PC-9 (cell line): ENCODE measurements at regions of chr10 and their contacts with region 1.

Region 1: GRCh38 chr10:112811740-112812551 is 138.1 kb upstream of the TCF7L2 start:
- DNase-seq: peak; percentile 72 to 98
- H3K4me3 ChIP-seq: peak overlapping the region; percentile 42; the same call in 1 of the 2 replicates
- H3K27ac ChIP-seq: peak overlapping the region; percentile 88
- H3K4me1 ChIP-seq: peaks cover 68% of the 10 kb centered on the region
- H3K27me3 ChIP-seq: no peaks in the 10 kb centered on the region
- CTCF ChIP-seq: no peak

Region 2: GRCh38 chr10:111954386-111954785 is 857.6 kb before region 1 on chr10:
- CTCF ChIA-PET with region 1: no interaction called
- POLR2A ChIA-PET with region 1: no interaction called
- intact Hi-C with region 1: no loop called
- DNase-seq: no peak
- H3K4me3 ChIP-seq: no peak overlapping the region
- H3K27ac ChIP-seq: no peak overlapping the region
- H3K4me1 ChIP-seq: no peaks in the 10 kb centered on the region
- H3K27me3 ChIP-seq: no peaks in the 10 kb centered on the region
- CTCF ChIP-seq: no peak

Region 3: DNA sequence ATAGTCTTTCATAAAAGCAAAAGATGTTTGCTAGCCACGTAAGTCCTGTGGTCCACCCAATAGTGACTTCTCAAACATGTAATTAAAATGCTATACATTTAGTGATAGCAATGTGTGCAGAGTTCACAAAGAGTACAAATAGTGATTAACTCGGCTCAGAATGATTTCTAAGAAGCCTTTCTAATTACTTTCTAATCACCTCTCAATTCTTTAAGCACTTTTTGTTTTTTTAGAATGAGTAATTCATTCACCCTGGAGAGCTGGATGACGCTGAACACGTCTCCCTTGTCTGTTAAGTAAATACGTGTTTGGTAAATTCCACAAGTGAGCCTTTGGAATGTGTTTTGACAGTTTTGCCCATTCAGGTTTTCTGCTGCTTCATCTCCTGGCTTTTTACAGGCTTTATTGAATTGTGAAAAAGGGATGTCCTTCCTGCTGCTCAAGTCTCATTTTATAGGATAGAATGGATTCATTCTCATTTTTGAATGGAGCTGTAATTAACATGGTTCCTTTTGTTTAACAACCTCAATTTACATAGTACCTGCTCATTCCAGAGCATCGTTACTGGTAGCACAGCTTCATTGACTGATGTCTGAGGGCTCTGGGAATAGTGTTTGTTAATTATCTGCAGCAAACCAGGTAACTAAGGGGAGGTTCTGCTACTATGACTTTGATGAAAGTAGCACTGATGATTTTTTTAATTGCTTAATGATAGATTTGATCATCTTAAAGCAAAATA is 152.9 kb before region 1 on chr10:
- CTCF ChIA-PET with region 1: no interaction called
- POLR2A ChIA-PET with region 1: no interaction called
- intact Hi-C with region 1: loop called (anchors 10 kb)
- DNase-seq: peak in 1 of 2 experiments; percentile 85
- H3K4me3 ChIP-seq: no peak overlapping the region
- H3K27ac ChIP-seq: peak overlapping the region; percentile 61
- H3K4me1 ChIP-seq: peaks cover 30% of the 10 kb centered on the region
- H3K27me3 ChIP-seq: no peaks in the 10 kb centered on the region
- CTCF ChIP-seq: no peak

Region 4: GRCh38 chr10:112711366-112711765 is 100.6 kb before region 1 on chr10:
- CTCF ChIA-PET with region 1: no interaction called
- POLR2A ChIA-PET with region 1: no interaction called
- intact Hi-C with region 1: no loop called
- DNase-seq: no peak
- H3K4me3 ChIP-seq: no peak overlapping the region
- H3K27ac ChIP-seq: no peak overlapping the region
- H3K4me1 ChIP-seq: no peaks in the 10 kb centered on the region
- H3K27me3 ChIP-seq: no peaks in the 10 kb centered on the region
- CTCF ChIP-seq: no peak

Region 5: GRCh38 chr10:112767156-112767555 is 44.8 kb before region 1 on chr10:
- CTCF ChIA-PET with region 1: no interaction called
- POLR2A ChIA-PET with region 1: no interaction called
- intact Hi-C with region 1: loop called (anchors 2 kb)
- DNase-seq: peak in 1 of 2 experiments; percentile 79
- H3K4me3 ChIP-seq: 0 out of 2 replicates have a peak overlapping the region, but pooled peaks have one; percentile 2
- H3K27ac ChIP-seq: peak overlapping the region; percentile 92
- H3K4me1 ChIP-seq: peaks cover 59% of the 10 kb centered on the region
- H3K27me3 ChIP-seq: no peaks in the 10 kb centered on the region
- CTCF ChIP-seq: no peak

Region 6: DNA sequence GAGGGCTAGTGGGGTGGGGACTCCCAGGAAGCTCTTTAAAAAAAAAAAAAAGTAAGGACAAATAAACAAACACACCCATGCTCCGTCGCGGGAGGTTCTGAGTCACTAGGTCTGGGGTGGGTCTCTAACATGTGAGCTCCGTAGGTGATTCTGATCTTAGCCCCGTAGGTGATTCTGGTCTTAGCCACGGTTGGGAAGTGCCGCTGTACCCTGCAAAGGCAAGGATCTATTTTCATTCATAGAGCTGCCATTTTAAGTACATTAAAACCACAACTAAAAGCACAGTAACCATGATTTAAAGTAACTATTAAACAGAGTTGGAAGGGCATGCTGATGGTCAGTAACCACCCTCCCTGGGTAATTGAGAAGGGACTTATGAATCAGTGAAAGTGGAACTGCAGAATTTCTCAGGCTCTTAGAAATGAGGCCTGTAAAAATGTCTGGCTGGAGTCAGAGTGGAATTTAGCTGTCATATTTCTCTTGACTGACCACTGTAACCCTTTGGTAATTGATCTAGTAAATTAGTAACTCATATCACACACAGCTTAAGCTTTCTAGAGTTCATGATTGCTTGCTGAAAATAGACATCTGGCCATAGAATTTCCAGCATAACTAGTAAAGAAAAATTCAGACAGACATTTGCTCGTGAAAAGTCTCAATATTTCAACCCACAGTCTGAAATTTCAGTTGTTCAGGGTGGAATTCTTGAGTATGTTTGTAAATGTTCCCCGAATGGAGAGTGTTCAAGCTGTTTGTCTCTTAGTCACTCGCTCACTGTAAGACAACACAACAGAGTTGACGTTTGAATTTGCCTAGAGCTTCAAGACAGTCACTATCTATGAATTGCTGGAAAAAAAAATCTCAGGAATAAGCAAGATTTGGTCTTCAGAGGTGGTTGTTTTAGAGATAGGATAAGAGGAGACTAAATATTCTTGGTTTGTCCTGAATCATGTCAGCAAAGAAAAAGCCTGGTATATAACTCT is 103.9 kb after region 1 on chr10:
- CTCF ChIA-PET with region 1: no interaction called
- POLR2A ChIA-PET with region 1: interaction called, 3 read pairs
- intact Hi-C with region 1: loop called (anchors 10 kb)
- DNase-seq: peak; percentile 62 to 82
- H3K4me3 ChIP-seq: peak overlapping the region; percentile 37; the same call in 1 of the 2 replicates
- H3K27ac ChIP-seq: peak overlapping the region; percentile 82
- H3K4me1 ChIP-seq: peaks cover 43% of the 10 kb centered on the region
- H3K27me3 ChIP-seq: no peaks in the 10 kb centered on the region
- CTCF ChIP-seq: no peak

Region 7: GRCh38 chr10:113073549-113074189 is 261.7 kb after region 1 on chr10:
- CTCF ChIA-PET with region 1: no interaction called
- POLR2A ChIA-PET with region 1: interaction called, 10 read pairs
- intact Hi-C with region 1: loop called (anchors 1 kb)
- DNase-seq: peak; percentile 89 to 96
- H3K4me3 ChIP-seq: peak overlapping the region; percentile 28; the same call in 1 of the 2 replicates
- H3K27ac ChIP-seq: peak overlapping the region; percentile 84
- H3K4me1 ChIP-seq: peaks cover 27% of the 10 kb centered on the region
- H3K27me3 ChIP-seq: no peaks in the 10 kb centered on the region
- CTCF ChIP-seq: no peak

Region 8: DNA sequence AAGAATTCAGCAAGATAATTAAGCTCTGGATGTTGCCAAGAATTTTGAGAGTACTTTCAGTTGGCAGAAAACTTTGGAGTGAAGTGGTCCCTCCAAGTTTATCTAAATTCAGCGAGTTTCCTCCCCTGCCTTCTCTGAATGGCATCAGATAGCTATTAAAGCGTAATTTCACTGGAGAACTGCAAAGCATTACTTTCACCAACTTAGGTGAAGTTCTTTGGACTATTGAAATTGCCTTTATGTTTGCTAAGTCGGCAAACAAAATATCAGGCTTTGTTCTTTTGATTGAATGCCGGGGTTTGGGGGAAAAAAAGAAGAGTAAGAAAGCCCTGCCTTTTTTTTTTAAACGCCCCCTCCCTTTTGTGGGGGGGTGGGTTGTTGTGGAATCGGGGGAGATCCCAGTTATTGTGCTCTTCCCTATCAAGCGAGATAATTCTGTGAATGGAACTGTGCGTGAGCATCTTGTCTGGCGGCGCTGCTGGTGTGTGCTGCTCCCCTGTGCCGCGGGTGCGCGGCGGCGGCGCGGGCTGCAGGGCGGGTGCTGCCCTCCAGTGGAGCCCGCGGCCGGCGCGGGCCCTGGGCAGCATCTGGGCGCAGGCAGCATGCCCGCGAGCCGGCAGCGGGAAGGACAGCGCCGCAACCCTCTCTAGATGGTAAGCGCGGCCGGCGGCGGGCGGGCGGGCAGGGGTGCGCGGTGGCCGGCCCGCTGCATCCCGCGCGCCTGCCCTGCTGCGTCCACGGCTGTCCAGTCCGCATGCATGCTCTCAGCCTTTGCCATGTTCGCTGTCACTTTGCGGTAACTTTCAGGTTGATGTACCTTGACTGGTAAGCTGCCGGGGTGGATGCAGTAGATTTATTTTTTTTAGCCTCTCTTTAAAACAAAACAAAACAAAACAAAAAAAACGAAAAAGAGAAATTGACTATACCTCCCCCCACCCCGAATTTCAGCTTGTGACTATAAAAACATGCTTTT is 314.6 kb after region 1 on chr10:
- CTCF ChIA-PET with region 1: interaction called, 6 read pairs
- POLR2A ChIA-PET with region 1: no interaction called
- intact Hi-C with region 1: loop called (anchors 5 kb)
- DNase-seq: peak in 1 of 2 experiments; percentile 63
- H3K4me3 ChIP-seq: peak overlapping the region; percentile 51; the same call in 1 of the 2 replicates
- H3K27ac ChIP-seq: no peak overlapping the region
- H3K4me1 ChIP-seq: peaks cover 19% of the 10 kb centered on the region
- H3K27me3 ChIP-seq: no peaks in the 10 kb centered on the region
- CTCF ChIP-seq: peak; percentile 42; the same call in 1 of the 2 replicates

Region 9: DNA sequence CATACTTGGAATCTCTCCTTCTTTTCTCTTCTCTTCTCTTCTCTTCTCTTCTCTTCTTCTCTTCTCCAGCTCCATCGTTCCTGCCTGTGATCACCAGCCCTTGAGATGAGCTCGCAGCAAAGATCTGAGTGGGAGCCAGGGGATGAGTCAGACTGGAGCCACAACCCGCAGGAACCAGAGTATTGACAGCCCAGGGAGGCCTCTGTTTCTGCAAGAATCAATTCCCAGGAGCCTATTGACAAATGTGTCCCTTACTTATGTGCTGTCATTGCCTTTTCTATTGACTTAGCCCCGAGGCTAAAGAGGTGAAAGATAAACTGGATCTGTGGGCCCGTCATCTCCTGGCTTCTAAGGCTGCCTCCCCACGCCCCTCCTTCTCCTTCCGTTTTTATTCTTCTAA is 727.8 kb after region 1 on chr10:
- CTCF ChIA-PET with region 1: no interaction called
- POLR2A ChIA-PET with region 1: no interaction called
- intact Hi-C with region 1: no loop called
- DNase-seq: no peak
- H3K4me3 ChIP-seq: no peak overlapping the region
- H3K27ac ChIP-seq: no peak overlapping the region
- H3K4me1 ChIP-seq: no peaks in the 10 kb centered on the region
- H3K27me3 ChIP-seq: peaks cover 25% of the 10 kb centered on the region
- CTCF ChIP-seq: no peak